ENCODE measurements at regions of chr17 and their contacts with region 1.

Region 1: GRCh38 chr17:48084932-48085444 is 16.3 kb downstream of the CBX1 start:
- DNase-seq: no peak
- H3K4me3 Mint-ChIP-seq: no peak overlapping the region
- H3K27ac Mint-ChIP-seq: no peak overlapping the region
- H3K4me1 Mint-ChIP-seq: no peaks in the 10 kb centered on the region
- H3K27me3 Mint-ChIP-seq: no peaks in the 10 kb centered on the region

Region 2: GRCh38 chr17:48068491-48068961 is 16.5 kb before region 1 on chr17:
- CTCF ChIA-PET with region 1: interaction called, 30 read pairs
- POLR2A ChIA-PET with region 1: interaction called, 8 read pairs
- intact Hi-C with region 1: no loop called
- DNase-seq: peak; percentile 24
- H3K4me3 Mint-ChIP-seq: no peak overlapping the region
- H3K27ac Mint-ChIP-seq: no peak overlapping the region
- H3K4me1 Mint-ChIP-seq: no peaks in the 10 kb centered on the region
- H3K27me3 Mint-ChIP-seq: no peaks in the 10 kb centered on the region

Region 3: GRCh38 chr17:48101012-48101720 is 16.2 kb after region 1 on chr17 and contains the start of gene CBX1:
- CTCF ChIA-PET with region 1: interaction called, 74 read pairs
- POLR2A ChIA-PET with region 1: no interaction called
- intact Hi-C with region 1: loop called (anchors 2 kb)
- DNase-seq: peak; percentile 96
- H3K4me3 Mint-ChIP-seq: peak within 1 kb of the TSS; percentile 98
- H3K27ac Mint-ChIP-seq: peak within 1 kb of the TSS; percentile 89
- H3K4me1 Mint-ChIP-seq: peaks cover 40% of the 10 kb centered on the region
- H3K27me3 Mint-ChIP-seq: no peaks in the 10 kb centered on the region
- total RNA-seq, gene CBX1: 55.3 to 56.7 TPM

Region 4: DNA sequence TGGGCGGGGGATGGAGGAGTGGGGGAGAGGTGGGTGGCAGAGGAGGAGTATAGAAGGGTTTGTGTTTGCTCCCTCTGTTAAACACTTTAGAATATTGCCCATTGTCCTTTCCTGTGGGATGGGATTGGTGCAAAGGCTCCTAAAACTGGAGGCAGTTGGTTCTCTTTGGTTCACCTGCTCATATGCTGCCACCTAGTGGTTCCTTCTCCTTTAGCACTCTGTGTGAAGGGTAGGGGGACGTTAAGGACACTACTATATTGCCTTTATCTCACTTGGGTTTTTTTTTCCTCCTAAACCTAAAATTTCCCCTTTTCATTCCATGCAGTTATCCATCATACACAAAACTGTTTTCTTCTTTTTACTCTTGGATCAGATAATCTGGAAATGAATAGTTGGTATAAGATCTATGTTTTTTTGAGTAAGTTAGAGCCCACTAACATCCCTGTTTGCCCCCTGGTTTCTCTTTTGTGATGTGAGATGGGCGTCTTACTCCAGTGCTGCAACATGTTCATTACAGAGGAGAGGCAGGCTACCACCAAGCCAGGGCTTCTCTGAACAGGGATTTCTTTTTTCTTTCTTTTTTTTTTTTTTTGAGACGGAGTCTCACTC is 46.3 kb after region 1 on chr17:
- CTCF ChIA-PET with region 1: interaction called, 79 read pairs
- POLR2A ChIA-PET with region 1: no interaction called
- intact Hi-C with region 1: loop called (anchors 1 kb)
- DNase-seq: peak; percentile 49
- H3K4me3 Mint-ChIP-seq: no peak overlapping the region
- H3K27ac Mint-ChIP-seq: no peak overlapping the region
- H3K4me1 Mint-ChIP-seq: no peaks in the 10 kb centered on the region
- H3K27me3 Mint-ChIP-seq: no peaks in the 10 kb centered on the region

Region 5: DNA sequence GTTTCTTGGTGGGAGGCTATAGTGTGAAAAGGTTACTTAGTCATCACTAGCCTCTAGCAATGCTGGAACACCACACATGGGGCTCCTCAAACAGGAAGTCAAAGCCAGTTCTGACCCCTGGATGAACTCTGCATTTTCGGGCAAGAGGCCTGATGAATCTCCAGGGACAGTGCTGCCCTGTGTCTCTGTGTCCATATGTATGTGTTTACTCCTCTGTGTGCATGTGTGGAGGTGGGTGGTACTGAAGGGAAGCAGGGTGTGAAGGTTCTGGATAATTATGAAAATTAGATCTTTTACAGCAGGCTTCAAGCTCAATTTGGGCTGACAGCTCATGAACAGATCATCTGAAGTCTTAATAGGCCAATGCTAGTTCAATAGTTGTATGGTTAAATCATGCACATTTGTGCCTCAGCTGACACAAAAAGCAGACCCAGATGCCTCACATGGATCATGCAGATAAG is 156.2 kb after region 1 on chr17:
- CTCF ChIA-PET with region 1: no interaction called
- POLR2A ChIA-PET with region 1: no interaction called
- intact Hi-C with region 1: no loop called
- DNase-seq: peak; percentile 46
- H3K4me3 Mint-ChIP-seq: no peak overlapping the region
- H3K27ac Mint-ChIP-seq: peak overlapping the region; percentile 47
- H3K4me1 Mint-ChIP-seq: peaks cover 78% of the 10 kb centered on the region
- H3K27me3 Mint-ChIP-seq: no peaks in the 10 kb centered on the region

Region 6: GRCh38 chr17:48618256-48618897 is 533.4 kb after region 1 on chr17:
- CTCF ChIA-PET with region 1: interaction called, 14 read pairs
- POLR2A ChIA-PET with region 1: no interaction called
- intact Hi-C with region 1: no loop called
- DNase-seq: peak; percentile 89
- H3K4me3 Mint-ChIP-seq: peak overlapping the region; percentile 17
- H3K27ac Mint-ChIP-seq: peak overlapping the region; percentile 40
- H3K4me1 Mint-ChIP-seq: peaks cover 42% of the 10 kb centered on the region
- H3K27me3 Mint-ChIP-seq: peaks cover 89% of the 10 kb centered on the region